ENCODE measurements at regions of chr6 and their contacts with region 1.

Region 1: GRCh38 chr6:132830334-132830751 is 16.0 kb downstream of the RPS12 start:
- DNase-seq: no peak
- H3K4me3 ChIP-seq: no peak overlapping the region
- H3K27ac ChIP-seq: no peak overlapping the region
- H3K4me1 ChIP-seq: no peaks in the 10 kb centered on the region
- H3K27me3 ChIP-seq: no peaks in the 10 kb centered on the region
- CTCF ChIP-seq: peak; percentile 38 to 66

Region 2: DNA sequence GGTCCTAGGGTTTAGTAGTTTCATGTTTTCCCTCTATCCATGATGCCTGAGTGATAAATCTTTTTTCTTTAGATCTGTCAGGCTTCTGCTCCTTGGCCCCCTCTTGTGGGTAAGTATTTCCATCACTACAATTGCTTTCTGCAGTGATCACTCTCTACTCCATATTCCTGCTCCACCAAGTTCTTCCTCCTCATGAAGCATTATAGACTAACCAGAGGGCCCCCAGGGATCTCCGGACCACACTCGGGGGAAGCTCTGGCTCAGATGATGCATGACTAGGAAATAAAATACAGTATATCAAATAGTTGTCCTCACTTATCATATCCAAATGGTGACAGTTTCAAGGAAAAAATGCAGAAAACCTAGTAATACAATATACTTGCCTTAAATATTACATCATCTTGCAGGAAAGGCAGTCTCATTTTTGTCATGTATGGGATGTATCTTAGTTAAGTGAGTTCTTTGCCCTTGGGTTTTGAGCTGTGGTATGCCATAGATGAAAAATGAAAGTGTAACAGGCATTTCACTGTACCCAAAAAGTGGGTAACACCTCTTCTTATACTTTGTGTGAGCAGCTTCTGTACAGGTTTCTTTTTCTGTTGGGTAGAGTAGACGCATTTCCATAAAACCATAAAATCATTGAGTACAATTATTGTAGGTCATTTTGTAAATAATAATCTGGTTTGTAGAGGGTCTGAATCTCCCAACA is 209.9 kb after region 1 on chr6:
- CTCF ChIA-PET with region 1: no interaction called
- dilution Hi-C with region 1: no loop called
- in situ Hi-C with region 1: no loop called
- intact Hi-C with region 1: loop called (anchors 2 kb)
- DNase-seq: peak; percentile 6
- H3K4me3 ChIP-seq: no peak overlapping the region
- H3K27ac ChIP-seq: no peak overlapping the region
- H3K4me1 ChIP-seq: no peaks in the 10 kb centered on the region
- H3K27me3 ChIP-seq: peaks cover 2% of the 10 kb centered on the region
- CTCF ChIP-seq: peak; percentile 29 to 64

Region 3: DNA sequence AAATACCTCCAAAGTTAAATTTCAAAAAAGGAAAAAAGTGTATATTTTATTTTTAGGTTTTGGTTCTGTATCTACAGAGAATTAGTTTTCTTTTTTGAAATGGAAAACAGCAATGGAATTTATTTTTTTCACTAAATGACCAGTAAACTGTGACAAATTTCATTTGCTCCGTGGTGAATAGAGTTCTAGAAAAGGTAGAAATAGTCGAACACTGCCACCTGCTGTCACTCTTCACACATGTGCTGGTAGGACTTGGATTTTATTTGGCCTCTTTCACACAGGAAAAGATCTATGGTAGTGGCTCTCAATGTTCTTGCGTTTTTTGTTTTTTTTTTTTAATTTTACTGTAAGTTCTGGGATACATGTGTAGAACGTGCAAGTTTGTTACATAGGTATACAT is 723.3 kb after region 1 on chr6:
- CTCF ChIA-PET with region 1: no interaction called
- dilution Hi-C with region 1: no loop called
- in situ Hi-C with region 1: no loop called
- intact Hi-C with region 1: loop called (anchors 1 kb)
- DNase-seq: peak; percentile 15
- H3K4me3 ChIP-seq: no peak overlapping the region
- H3K27ac ChIP-seq: no peak overlapping the region
- H3K4me1 ChIP-seq: no peaks in the 10 kb centered on the region
- H3K27me3 ChIP-seq: peaks cover 6% of the 10 kb centered on the region
- CTCF ChIP-seq: peak; percentile 61 to 73